ENCODE measurements at regions of chr1 and their contacts with region 1.

Region 1: DNA sequence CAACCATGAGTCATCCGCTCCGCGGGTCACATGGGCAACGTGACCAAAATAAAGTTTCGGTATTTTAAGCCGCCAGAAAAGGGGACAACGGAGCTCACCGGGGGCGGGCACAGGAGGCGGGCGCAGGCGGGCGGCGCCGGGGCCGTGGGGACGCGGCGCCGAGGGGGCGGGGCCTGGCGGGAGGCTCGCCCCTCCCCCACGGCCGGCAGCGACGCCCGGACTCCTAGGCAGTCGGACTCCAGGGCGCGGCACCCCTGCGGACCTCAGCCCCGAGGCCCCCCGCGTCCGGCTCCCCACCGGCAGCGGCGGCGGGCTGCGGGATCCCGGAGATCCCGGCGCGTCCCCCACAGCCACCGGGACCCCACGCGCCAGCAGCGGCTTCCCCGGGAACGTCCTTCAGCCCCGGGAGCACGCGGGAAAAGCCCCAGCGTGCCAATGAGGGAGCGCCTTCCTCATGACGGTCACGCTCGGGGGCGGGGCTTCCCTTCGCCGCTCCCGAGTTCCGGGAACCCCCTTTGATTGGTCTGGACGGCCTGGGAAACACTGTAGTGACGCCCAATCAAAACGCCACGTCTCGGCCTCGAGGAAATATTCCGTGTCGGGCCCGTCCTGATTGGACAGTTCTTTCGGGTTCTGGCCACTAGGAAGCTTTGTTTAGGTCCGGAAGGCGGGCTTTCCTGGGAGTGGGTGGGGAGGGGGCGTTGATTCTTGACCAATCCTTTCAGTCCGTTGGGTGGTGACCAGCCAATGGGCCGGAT is 515 bp upstream of the CAMTA1 start:
- DNase-seq: peak; percentile 99
- ATAC-seq: peak; percentile 88
- H3K4me3 Mint-ChIP-seq: peak overlapping the region; percentile 75
- H3K27ac Mint-ChIP-seq: peak overlapping the region; percentile 78
- H3K4me1 Mint-ChIP-seq: peaks cover 42% of the 10 kb centered on the region
- H3K27me3 Mint-ChIP-seq: no peaks in the 10 kb centered on the region

Region 2: GRCh38 chr1:6199298-6200187 is 585.2 kb before region 1 on chr1 and contains the start of gene RPL22:
- CTCF ChIA-PET with region 1: no interaction called
- POLR2A ChIA-PET with region 1: no interaction called
- intact Hi-C with region 1: loop called in 1 of 2 experiments (anchors 1 kb)
- DNase-seq: peak; percentile 99
- ATAC-seq: peak; percentile 99
- H3K4me3 Mint-ChIP-seq: peak within 1 kb of the TSS; percentile 99
- H3K27ac Mint-ChIP-seq: peak within 1 kb of the TSS; percentile 96
- H3K4me1 Mint-ChIP-seq: peaks cover 39% of the 10 kb centered on the region
- H3K27me3 Mint-ChIP-seq: no peaks in the 10 kb centered on the region
- total RNA-seq, gene RPL22: 392 to 475 TPM

Region 3: GRCh38 chr1:6464514-6464836 is 320.3 kb before region 1 on chr1:
- CTCF ChIA-PET with region 1: no interaction called
- POLR2A ChIA-PET with region 1: no interaction called
- intact Hi-C with region 1: loop called in 1 of 2 experiments (anchors 10 kb)
- DNase-seq: peak; percentile 80
- ATAC-seq: peak; percentile 21
- H3K4me3 Mint-ChIP-seq: peak overlapping the region; percentile 84
- H3K27ac Mint-ChIP-seq: peak overlapping the region; percentile 83
- H3K4me1 Mint-ChIP-seq: peaks cover 50% of the 10 kb centered on the region
- H3K27me3 Mint-ChIP-seq: no peaks in the 10 kb centered on the region

Region 4: DNA sequence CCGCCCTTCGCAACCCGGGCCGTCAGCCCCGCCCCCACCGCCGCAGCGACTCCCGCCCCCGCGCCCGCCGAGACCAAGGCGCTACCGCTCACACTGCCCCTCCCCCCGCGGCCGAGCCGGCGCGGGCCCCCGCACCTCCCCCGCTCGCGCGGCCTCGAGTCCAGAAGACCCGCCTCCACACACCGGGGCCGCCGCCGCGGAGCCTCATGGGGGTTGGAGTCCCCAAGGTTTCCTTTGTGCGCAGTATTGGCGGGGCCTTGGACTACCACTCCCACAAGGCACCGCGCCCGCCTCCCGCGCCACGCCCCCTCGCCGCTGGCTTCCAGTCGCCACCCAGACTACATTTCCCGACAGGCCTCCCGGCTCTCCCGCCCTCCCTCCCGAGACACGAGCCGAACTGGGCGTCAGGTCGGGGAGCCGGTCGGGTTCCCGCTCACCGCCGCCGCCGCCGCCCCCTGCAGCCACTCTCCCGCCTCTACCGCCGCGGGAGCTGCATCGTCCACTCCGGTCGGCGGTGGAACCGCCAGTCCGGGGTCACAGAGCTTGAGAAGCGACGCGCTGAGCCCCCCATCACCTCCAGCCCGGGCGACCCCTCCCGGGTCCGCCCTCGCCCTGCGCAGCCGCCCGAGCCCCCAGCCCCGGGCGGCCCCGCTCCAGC is 171.2 kb before region 1 on chr1 and contains the start of gene PHF13:
- CTCF ChIA-PET with region 1: interaction called, 3 read pairs
- POLR2A ChIA-PET with region 1: no interaction called
- intact Hi-C with region 1: loop called in 1 of 2 experiments (anchors 1 kb)
- DNase-seq: peak; percentile 100
- ATAC-seq: peak; percentile 98
- H3K4me3 Mint-ChIP-seq: peak within 1 kb of the TSS; percentile 80
- H3K27ac Mint-ChIP-seq: peak within 1 kb of the TSS; percentile 87
- H3K4me1 Mint-ChIP-seq: peaks cover 20% of the 10 kb centered on the region
- H3K27me3 Mint-ChIP-seq: no peaks in the 10 kb centered on the region
- total RNA-seq, gene PHF13: 13.2 to 13.6 TPM

Region 5: DNA sequence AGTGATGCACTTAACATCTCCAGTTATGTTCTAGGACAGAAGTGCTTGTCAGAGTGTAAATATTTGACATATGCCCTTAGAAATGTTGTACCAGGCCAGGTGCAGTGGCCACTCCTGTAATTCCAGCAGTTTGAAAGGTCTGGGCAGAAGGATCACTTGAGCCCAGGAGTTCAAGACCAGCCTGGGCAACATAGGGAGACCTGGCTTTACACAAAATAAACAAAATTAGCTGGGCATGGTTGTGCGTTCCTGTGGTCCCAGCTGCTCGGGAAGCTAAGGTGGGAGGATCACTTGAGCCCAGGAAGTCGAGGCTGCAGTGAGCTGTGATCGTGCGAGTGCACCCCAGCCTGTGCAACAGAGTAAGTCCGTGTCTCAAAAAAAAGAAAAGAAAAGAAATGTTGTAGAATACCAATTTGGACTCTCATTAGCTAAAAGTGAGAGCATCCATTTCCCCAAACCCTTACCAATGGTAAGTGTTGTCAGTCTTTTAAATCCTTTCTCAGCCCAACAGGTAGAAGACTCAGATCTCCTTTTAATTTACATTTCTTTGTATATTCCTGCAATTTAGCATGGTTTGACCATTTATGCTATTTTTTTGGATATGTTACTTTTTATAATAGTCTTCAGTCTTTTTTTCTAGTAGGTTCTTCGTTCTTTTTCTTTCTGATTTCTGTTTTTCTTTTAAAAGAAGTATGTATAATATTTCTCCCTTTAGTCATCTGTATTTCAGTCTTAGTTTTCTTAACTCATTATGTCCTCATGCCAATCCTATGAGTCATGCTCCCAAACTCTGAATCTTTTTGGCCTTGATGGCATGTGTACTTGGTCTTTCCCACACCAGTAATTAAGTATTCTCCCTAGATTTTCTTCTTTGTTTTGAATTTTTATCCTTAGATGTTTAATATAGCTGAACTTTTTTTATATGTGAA is 74.9 kb after region 1 on chr1:
- CTCF ChIA-PET with region 1: no interaction called
- POLR2A ChIA-PET with region 1: no interaction called
- intact Hi-C with region 1: loop called in 1 of 2 experiments (anchors 2 kb)
- DNase-seq: no peak
- ATAC-seq: peak; percentile 57
- H3K4me3 Mint-ChIP-seq: no peak overlapping the region
- H3K27ac Mint-ChIP-seq: peak overlapping the region; percentile 21
- H3K4me1 Mint-ChIP-seq: peaks cover 21% of the 10 kb centered on the region
- H3K27me3 Mint-ChIP-seq: no peaks in the 10 kb centered on the region

Region 6: DNA sequence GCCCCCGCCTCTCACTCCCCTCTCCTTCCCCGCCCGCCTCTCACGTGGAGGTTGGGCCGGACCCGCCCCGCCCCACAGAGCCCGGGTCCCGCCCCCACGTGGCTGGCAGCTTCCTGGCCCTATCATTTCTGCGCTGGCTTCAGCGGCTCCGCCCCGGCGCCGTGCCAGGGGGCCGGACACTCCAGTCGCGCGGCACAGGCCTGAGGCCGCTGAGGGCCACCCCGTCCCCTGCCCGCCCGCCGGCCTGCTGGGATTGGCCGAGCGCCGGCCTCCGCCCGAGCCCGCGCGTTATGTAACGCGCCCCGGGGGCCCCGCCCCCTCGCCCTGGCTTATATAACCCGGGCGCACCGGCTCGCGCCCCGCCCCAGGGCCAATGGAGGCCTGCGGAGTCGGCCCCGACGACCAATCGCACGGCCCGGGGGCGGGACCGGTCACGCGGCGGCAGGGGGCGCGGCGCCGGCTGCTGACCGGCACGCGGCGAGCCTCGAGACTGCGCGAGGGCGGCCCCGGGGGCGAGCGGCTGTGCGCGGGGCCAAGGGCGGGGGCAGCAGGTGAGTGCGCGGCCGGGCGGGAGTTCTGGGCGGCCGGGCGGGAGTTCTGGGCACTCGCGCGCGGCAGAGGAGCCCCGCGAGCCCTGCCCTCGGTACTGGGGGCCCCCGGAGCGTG is 999.2 kb after region 1 on chr1 and contains the start of gene PER3:
- CTCF ChIA-PET with region 1: no interaction called
- POLR2A ChIA-PET with region 1: no interaction called
- intact Hi-C with region 1: loop called in 1 of 2 experiments (anchors 1 kb)
- DNase-seq: peak; percentile 92
- ATAC-seq: peak; percentile 95
- H3K4me3 Mint-ChIP-seq: peak within 1 kb of the TSS; percentile 67
- H3K27ac Mint-ChIP-seq: no peak within 1 kb of the TSS
- H3K4me1 Mint-ChIP-seq: peaks cover 22% of the 10 kb centered on the region
- H3K27me3 Mint-ChIP-seq: no peaks in the 10 kb centered on the region
- total RNA-seq, gene PER3: 2.3 to 2.5 TPM